Activated CD4-positive, alpha-beta memory T cell treated with anti-CD3 and anti-CD28 coated beads for 36 hours (primary cell): ENCODE measurements at regions of chr1 and their contacts with region 1.

Region 1: DNA sequence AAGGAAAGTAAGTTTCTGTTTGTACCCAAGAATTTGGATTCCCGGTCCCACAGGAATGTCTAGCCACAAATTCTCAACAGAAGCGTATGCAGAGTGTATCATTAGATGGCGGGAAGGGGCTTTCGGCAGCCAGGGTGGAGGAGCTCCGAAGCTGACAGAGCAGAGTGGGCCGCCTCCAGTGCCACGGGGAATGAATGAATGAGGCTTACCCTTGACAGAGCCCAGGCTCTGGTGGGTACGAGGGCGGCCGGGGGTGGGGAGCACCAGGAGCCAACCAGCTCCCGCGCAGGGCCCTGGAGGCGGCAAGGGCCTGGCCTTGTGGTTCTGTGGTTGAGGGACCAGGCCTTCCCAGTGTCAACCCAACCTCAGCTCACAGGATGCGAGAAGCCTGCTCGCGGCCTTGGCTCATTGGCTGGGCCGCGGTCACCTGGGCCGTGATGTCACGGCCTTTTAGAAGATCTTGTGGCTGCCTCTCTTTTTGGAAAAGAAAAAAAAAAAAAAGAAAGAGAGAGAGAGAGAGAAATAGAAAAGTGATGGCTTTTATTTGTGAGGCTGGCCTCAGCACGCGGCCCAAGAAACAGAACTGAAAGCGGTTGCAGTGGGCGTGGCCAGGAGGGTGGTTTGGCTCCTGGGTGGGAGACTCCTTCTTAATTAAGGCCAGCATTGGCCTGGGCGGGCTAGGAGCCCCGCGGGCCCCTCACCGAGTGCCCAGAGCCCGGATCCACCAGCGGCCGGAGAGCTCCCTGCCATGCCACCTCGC is 34.9 kb upstream of the RUNX3 start:
- DNase-seq: peak; percentile 97
- H3K4me3 Mint-ChIP-seq: peak overlapping the region; percentile 93
- H3K27ac Mint-ChIP-seq: peak overlapping the region; percentile 97
- H3K4me1 Mint-ChIP-seq: peaks cover 78% of the 10 kb centered on the region
- H3K27me3 Mint-ChIP-seq: no peaks in the 10 kb centered on the region

Region 2: GRCh38 chr1:24861821-24862727 is 102.9 kb before region 1 on chr1:
- CTCF ChIA-PET with region 1: no interaction called
- POLR2A ChIA-PET with region 1: no interaction called
- intact Hi-C with region 1: no loop called
- DNase-seq: no peak
- H3K4me3 Mint-ChIP-seq: no peak overlapping the region
- H3K27ac Mint-ChIP-seq: no peak overlapping the region
- H3K4me1 Mint-ChIP-seq: no peaks in the 10 kb centered on the region
- H3K27me3 Mint-ChIP-seq: peaks cover 2% of the 10 kb centered on the region

Region 3: DNA sequence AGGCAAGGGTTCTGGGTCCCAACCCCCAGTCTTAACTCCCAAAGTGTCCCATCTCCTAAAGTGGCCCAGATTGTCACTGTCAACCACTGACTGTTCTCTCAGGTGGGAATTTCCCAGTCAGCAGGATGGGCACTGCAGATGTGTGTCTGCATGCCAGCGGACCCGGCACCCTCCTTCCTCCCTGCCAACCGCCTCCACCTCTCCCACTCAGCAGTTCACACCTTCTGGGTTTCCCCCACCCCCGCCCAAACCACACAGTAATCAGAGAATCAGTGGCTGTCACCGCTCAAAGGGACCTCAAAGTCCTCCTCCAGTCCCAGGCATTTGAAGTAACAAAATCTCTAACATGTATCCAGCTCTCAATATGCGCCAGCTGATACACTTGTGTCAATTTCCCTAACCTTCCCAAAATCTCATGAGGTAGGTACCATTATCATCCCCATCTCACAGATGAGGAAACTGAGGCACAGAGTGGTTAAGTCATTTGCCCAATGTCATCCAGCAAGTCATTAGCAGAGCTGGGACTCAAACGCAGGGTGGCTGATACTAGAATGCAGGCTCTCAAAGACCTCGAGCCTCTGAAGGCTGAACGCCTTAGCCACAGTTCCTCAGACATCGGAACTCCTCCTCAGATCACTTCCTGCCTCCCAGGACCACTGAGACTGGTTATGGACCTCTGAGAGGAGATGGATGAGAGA is 39.8 kb before region 1 on chr1:
- CTCF ChIA-PET with region 1: interaction called, 40 read pairs
- POLR2A ChIA-PET with region 1: interaction called, 12 read pairs
- intact Hi-C with region 1: loop called (anchors 1 kb)
- DNase-seq: peak; percentile 95
- H3K4me3 Mint-ChIP-seq: peak overlapping the region; percentile 81
- H3K27ac Mint-ChIP-seq: peak overlapping the region; percentile 91
- H3K4me1 Mint-ChIP-seq: peaks cover 69% of the 10 kb centered on the region
- H3K27me3 Mint-ChIP-seq: no peaks in the 10 kb centered on the region

Region 4: DNA sequence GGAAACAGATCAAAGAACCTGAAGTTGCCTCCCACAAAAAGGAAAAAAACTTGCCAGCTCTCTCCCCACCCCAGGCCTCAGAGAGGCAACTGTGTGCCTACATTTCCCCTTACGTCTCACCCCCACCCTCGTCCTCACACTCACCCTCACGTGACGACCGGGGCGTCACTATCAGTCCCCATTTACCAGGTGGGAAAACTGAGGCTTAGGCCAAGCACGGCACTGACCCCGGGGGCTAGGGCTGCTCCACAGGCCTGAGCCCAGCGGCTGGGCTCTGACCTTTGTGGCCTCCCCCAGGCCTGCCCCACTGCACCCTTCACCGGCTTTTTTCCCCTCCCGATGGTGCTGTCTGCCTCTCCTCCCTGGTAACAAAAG is 16.6 kb after region 1 on chr1:
- CTCF ChIA-PET with region 1: interaction called, 3 read pairs
- POLR2A ChIA-PET with region 1: interaction called, 4 read pairs
- intact Hi-C with region 1: loop called (anchors 2 kb)
- DNase-seq: peak; percentile 58
- H3K4me3 Mint-ChIP-seq: no peak overlapping the region
- H3K27ac Mint-ChIP-seq: peak overlapping the region; percentile 71
- H3K4me1 Mint-ChIP-seq: peaks cover 78% of the 10 kb centered on the region
- H3K27me3 Mint-ChIP-seq: no peaks in the 10 kb centered on the region

Region 5: DNA sequence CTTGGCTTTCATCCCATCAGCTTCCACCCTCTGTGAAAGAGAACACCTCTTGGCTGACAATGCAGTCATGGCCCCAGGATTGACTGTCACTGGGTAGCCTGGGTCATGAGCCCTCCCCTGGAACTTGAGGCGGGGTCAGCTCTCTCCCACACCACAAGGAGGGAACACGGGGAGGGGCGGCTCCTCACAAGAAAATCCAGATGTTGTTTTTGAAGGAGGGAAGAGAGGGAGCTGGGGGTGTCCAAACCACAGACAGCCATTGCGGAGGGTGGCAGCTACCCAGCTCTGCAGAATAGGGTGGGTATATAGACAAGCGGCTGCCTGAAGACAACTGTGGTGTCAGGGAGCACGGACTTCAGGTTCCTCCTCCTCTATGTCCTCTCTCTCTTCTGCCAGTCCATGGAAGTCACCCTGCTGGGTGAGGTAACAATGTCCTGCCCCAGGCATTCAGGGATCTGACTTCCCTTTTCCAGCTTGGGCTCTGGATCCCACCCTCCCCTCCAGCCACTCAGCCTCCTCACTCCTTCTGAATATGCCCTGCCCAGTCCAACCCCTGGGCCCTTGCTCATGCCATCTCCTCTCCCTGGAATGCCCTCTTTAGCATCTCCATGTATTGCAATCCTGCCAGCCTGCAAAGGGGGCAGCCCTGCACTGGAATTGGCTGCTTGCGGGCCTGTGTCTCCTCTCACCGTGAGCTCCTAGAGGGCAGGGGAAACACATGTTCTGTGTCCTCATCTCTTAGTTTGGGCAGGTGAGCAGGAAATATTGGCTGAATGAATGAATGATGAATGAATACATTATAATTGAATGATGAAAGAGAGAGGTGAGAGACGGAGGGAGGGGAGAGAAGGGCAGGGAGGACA is 26.0 kb after region 1 on chr1:
- CTCF ChIA-PET with region 1: interaction called, 4 read pairs
- POLR2A ChIA-PET with region 1: interaction called, 7 read pairs
- intact Hi-C with region 1: loop called (anchors 2 kb)
- DNase-seq: peak; percentile 41
- H3K4me3 Mint-ChIP-seq: no peak overlapping the region
- H3K27ac Mint-ChIP-seq: peak overlapping the region; percentile 94
- H3K4me1 Mint-ChIP-seq: peaks cover 82% of the 10 kb centered on the region
- H3K27me3 Mint-ChIP-seq: no peaks in the 10 kb centered on the region

Region 6: DNA sequence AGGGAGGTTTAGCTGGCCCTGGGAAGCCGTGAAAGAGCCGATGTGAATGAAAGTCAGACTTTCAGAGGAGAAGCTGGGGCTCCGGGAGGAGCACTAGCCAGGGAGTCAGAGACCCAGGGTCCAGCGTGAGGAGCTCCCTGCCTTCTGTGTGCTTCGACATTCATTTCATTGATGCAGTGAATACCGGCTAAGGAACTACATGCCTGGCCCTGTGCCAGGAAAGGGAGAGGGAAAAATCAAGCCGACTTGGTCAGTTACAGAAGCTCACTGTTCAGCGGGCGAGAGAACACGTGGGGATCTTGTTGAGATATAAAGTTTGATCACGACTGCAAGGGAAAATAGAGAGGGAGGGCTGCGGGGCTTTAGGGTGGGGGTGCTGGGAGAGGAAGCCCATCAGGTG is 41.8 kb after region 1 on chr1:
- CTCF ChIA-PET with region 1: interaction called, 3 read pairs
- POLR2A ChIA-PET with region 1: no interaction called
- intact Hi-C with region 1: loop called (anchors 5 kb)
- DNase-seq: no peak
- H3K4me3 Mint-ChIP-seq: no peak overlapping the region
- H3K27ac Mint-ChIP-seq: no peak overlapping the region
- H3K4me1 Mint-ChIP-seq: peaks cover 56% of the 10 kb centered on the region
- H3K27me3 Mint-ChIP-seq: no peaks in the 10 kb centered on the region

Region 7: GRCh38 chr1:25022361-25023189 is 57.6 kb after region 1 on chr1:
- CTCF ChIA-PET with region 1: interaction called, 12 read pairs
- POLR2A ChIA-PET with region 1: interaction called, 30 read pairs
- intact Hi-C with region 1: loop called (anchors 1 kb)
- DNase-seq: peak; percentile 97
- H3K4me3 Mint-ChIP-seq: peak overlapping the region; percentile 77
- H3K27ac Mint-ChIP-seq: peak overlapping the region; percentile 97
- H3K4me1 Mint-ChIP-seq: peaks cover 84% of the 10 kb centered on the region
- H3K27me3 Mint-ChIP-seq: no peaks in the 10 kb centered on the region